Activated CD4-positive, alpha-beta T cell treated with anti-CD3 and anti-CD28 coated beads for 36 hours (primary cell): ENCODE measurements at regions of chr2 and their contacts with region 1.

Region 1: GRCh38 chr2:105797298-105797819 is 52.6 kb downstream of the NCK2 start:
- DNase-seq: peak; percentile 69
- ATAC-seq: peak; percentile 44
- H3K4me3 Mint-ChIP-seq: peak overlapping the region; percentile 64
- H3K27ac Mint-ChIP-seq: peak overlapping the region; percentile 94
- H3K4me1 Mint-ChIP-seq: peaks cover 96% of the 10 kb centered on the region
- H3K27me3 Mint-ChIP-seq: no peaks in the 10 kb centered on the region

Region 2: DNA sequence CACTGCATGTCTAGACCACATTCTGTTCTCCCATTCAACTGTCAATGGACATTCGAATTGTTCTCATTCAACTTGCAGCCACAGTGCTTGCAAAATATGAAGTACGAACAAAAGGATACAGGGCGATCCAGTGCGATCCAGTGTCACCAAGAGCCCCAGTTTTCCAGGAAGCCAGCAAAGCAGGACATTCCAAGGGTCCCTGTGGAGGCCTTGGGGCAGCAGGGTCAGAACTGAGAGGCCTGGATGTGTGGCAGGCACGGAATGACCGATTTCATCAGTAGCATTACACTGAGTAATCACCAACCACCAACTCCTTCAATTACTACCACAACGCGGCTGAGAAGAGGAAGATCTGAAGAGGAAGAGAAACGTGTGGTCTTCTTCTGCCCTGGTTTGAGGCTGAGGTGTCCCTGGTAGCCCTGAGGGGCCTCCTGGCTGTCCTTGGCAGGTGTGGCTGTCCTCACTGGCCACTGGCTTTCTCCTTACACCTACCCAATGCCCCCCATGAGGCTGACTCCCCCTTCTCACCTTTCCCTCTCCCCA is 225.8 kb before region 1 on chr2:
- CTCF ChIA-PET with region 1: no interaction called
- POLR2A ChIA-PET with region 1: no interaction called
- intact Hi-C with region 1: no loop called
- DNase-seq: no peak
- ATAC-seq: no peak
- H3K4me3 Mint-ChIP-seq: no peak overlapping the region
- H3K27ac Mint-ChIP-seq: no peak overlapping the region
- H3K4me1 Mint-ChIP-seq: peaks cover 10% of the 10 kb centered on the region
- H3K27me3 Mint-ChIP-seq: peaks cover 6% of the 10 kb centered on the region

Region 3: GRCh38 chr2:105671156-105671555 is 126.2 kb before region 1 on chr2:
- CTCF ChIA-PET with region 1: no interaction called
- POLR2A ChIA-PET with region 1: no interaction called
- intact Hi-C with region 1: loop called in 1 of 2 experiments (anchors 5 kb)
- DNase-seq: no peak
- ATAC-seq: no peak
- H3K4me3 Mint-ChIP-seq: no peak overlapping the region
- H3K27ac Mint-ChIP-seq: no peak overlapping the region
- H3K4me1 Mint-ChIP-seq: peaks cover 19% of the 10 kb centered on the region
- H3K27me3 Mint-ChIP-seq: no peaks in the 10 kb centered on the region

Region 4: GRCh38 chr2:105749583-105750400 is 47.6 kb before region 1 on chr2:
- CTCF ChIA-PET with region 1: interaction called, 15 read pairs
- POLR2A ChIA-PET with region 1: interaction called, 33 read pairs
- intact Hi-C with region 1: loop called (anchors 1 to 2 kb)
- DNase-seq: peak; percentile 78
- ATAC-seq: peak; percentile 23
- H3K4me3 Mint-ChIP-seq: peak overlapping the region; percentile 97
- H3K27ac Mint-ChIP-seq: peak overlapping the region; percentile 99
- H3K4me1 Mint-ChIP-seq: peaks cover 71% of the 10 kb centered on the region
- H3K27me3 Mint-ChIP-seq: no peaks in the 10 kb centered on the region

Region 5: GRCh38 chr2:105836840-105837692 is 39.7 kb after region 1 on chr2:
- CTCF ChIA-PET with region 1: no interaction called
- POLR2A ChIA-PET with region 1: interaction called, 3 read pairs
- intact Hi-C with region 1: loop called (anchors 1 to 2 kb)
- DNase-seq: peak; percentile 74
- ATAC-seq: peak; percentile 85
- H3K4me3 Mint-ChIP-seq: peak overlapping the region; percentile 50
- H3K27ac Mint-ChIP-seq: peak overlapping the region; percentile 82
- H3K4me1 Mint-ChIP-seq: peaks cover 88% of the 10 kb centered on the region
- H3K27me3 Mint-ChIP-seq: no peaks in the 10 kb centered on the region

Region 6: DNA sequence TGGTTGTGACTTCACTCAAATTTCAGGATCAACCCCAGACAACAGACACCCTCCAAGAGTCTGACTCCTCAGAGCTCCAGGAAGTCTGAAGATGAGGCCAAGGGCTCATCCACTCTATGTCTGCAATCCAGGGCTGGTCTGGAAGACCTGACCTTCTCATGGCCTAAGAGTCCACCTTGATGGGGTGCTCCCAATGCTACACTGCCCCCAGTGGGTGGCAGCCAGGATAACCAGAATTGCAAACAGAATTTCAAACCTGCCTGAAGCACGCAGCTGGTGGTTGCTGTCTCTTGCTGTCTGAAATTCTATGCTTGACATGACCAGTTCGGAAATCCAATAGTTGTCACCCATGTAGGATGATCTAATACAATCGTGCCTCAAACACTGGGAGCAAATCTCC is 300.7 kb after region 1 on chr2:
- CTCF ChIA-PET with region 1: no interaction called
- POLR2A ChIA-PET with region 1: no interaction called
- intact Hi-C with region 1: loop called in 1 of 2 experiments (anchors 2 kb)
- DNase-seq: peak; percentile 65
- ATAC-seq: no peak
- H3K4me3 Mint-ChIP-seq: no peak overlapping the region
- H3K27ac Mint-ChIP-seq: no peak overlapping the region
- H3K4me1 Mint-ChIP-seq: peaks cover 41% of the 10 kb centered on the region
- H3K27me3 Mint-ChIP-seq: no peaks in the 10 kb centered on the region